Sciatic nerve (tissue), 2 donors: ENCODE measurements at regions of chr1 and their contacts with region 1.

Region 1: GRCh38 chr1:213089924-213090677 is 39.1 kb downstream of the RPS6KC1 start:
- DNase-seq: no peak
- ATAC-seq: no peak

Region 2: DNA sequence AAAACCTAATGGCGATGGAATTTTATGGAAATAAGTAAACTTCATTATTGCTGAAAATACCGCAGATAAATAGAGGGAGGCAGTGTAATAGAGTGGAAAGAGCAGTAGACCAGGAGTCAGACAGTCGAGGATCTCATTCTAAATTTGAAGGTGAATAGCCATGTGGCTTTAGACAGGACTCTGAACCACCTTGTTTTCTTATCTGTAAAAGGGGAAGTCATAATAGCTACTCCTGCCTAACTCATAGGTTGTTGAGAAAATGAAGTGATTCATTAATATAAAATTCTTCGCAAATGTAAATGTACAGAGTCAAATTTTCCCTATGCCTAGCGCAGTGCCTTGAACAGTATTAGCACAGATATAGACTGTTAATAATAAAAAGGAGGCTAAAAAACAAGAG is 24.3 kb before region 1 on chr1:
- intact Hi-C with region 1: loop called (anchors 2 kb)
- DNase-seq: no peak
- ATAC-seq: no peak